Caco-2 (cell line): ENCODE measurements at regions of chr10 and their contacts with region 1.

Region 1: DNA sequence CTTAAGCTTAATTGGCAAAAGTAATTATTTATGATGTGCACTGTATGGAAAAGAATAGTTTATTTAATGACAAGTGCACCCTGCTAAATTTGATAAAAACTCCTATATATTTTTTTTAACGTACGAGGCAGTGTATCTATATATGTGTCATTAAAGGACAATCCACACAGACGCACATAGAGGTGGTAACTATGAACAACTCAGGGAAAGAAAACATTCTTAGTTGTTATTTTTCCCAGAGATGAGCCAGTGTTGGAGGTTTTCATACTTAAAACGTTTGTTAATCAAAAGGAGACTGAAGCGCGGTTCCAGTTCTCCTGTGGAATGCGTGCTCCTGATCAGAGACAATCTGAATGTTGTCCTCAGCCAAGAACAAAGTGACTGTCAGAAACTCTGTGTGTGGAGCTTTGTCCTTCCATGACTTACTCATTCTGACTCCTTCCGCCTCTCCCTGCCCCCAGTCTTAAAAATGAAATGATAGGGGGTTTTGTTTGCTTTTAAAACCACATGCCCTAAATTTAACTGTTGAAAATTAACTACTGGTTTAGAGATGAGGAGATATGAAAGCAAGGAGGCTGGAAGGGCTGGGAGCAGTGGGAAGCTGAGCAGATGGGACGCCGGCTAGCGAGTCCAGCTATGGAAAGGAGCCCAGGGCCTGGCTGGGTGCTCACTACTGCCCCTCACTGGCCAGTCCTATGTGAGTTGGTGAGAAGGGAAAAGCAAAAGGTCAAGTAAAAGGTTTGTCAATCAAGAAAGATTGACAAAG is 99.6 kb downstream of the SVIL start:
- DNase-seq: peak; percentile 92 to 95
- H3K4me3 ChIP-seq: no peak overlapping the region
- H3K4me3 Mint-ChIP-seq: peak overlapping the region; percentile 64
- H3K27ac Mint-ChIP-seq: peak overlapping the region; percentile 80
- H3K4me1 ChIP-seq: peaks cover 38% of the 10 kb centered on the region
- H3K4me1 Mint-ChIP-seq: peaks cover 24% of the 10 kb centered on the region
- H3K27me3 ChIP-seq: no peaks in the 10 kb centered on the region
- H3K27me3 Mint-ChIP-seq: no peaks in the 10 kb centered on the region
- CTCF ChIP-seq: peak; percentile 85 to 95

Region 2: DNA sequence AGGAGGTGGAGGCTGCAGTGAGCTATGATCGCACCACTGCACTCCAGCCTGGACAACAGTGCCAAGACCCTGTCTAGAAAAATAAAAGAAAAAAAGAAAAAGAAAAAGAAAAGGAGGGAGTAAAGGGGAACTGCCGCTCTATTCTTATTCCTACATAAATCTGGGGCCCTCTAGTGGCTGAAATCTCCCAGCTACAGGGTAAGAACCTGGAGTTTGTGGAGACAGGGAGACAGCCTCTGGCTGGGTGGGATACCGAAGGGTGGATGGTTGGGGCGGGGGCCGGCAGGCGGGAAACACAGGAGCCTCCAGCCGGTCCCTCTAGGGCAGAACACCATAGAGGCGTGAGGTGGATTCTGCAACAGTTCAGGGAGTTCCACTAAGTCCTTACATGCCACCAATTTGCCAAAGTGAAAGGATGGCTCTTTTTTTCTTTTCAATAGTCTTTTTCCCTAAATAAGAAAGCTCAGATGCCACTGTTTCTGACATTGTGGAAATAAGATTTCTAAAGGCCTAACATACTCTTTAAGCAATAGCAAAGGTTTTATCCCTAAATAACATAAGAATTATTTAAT is 17.8 kb before region 1 on chr10:
- CTCF ChIA-PET with region 1: interaction called, 20 read pairs
- POLR2A ChIA-PET with region 1: interaction called, 16 read pairs
- intact Hi-C with region 1: loop called (anchors 1 kb)
- DNase-seq: peak in 1 of 2 experiments; percentile 63
- H3K4me3 ChIP-seq: no peak overlapping the region
- H3K4me3 Mint-ChIP-seq: no peak overlapping the region
- H3K27ac Mint-ChIP-seq: no peak overlapping the region
- H3K4me1 ChIP-seq: 0 out of 2 replicates have a peak, but pooled peaks cover 5% of the 10 kb centered on the region
- H3K4me1 Mint-ChIP-seq: peaks cover 6% of the 10 kb centered on the region
- H3K27me3 ChIP-seq: no peaks in the 10 kb centered on the region
- H3K27me3 Mint-ChIP-seq: no peaks in the 10 kb centered on the region
- CTCF ChIP-seq: peak; percentile 76 to 82

Region 3: GRCh38 chr10:29524294-29524693 is 10.9 kb before region 1 on chr10:
- CTCF ChIA-PET with region 1: interaction called, 13 read pairs
- POLR2A ChIA-PET with region 1: no interaction called
- intact Hi-C with region 1: no loop called
- DNase-seq: no peak
- H3K4me3 ChIP-seq: no peak overlapping the region
- H3K4me3 Mint-ChIP-seq: no peak overlapping the region
- H3K27ac Mint-ChIP-seq: no peak overlapping the region
- H3K4me1 ChIP-seq: no peaks in the 10 kb centered on the region
- H3K4me1 Mint-ChIP-seq: no peaks in the 10 kb centered on the region
- H3K27me3 ChIP-seq: no peaks in the 10 kb centered on the region
- H3K27me3 Mint-ChIP-seq: no peaks in the 10 kb centered on the region
- CTCF ChIP-seq: no peak

Region 4: DNA sequence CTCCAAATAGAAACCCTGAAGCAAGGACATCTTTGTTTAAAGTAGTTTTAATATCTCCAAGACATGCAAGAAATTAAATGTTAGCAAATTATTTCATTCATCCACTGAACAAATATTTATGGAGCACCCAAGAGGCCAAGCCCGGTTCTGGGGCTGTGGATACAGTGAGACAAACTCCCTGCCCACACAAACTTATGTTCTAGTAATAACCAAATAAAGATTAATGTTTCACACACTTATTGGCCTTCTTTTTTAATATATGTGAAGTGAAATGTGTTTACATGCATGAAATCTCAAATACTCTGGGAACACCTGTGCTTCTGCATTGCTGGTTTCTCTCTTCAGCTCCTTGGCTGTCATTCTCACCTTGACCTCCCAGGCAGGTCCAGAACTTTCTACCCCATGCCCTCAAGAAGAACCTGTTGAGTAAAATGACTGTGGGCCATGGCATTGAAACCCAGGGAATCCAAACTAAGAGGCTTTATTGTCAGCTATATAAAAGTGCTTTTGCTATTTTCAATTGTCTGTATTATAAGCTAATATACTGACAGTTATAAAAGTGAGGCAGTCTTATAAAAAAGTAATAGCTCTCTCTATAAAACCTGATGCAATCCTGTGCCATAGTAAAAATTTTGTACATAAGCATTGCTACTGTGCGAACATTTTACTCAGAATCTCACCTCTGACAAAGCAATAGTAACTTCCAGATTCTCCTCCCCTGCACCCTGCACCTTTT is 55.9 kb after region 1 on chr10:
- CTCF ChIA-PET with region 1: interaction called, 6 read pairs
- POLR2A ChIA-PET with region 1: no interaction called
- intact Hi-C with region 1: loop called (anchors 1 kb)
- DNase-seq: no peak
- H3K4me3 ChIP-seq: no peak overlapping the region
- H3K4me3 Mint-ChIP-seq: no peak overlapping the region
- H3K27ac Mint-ChIP-seq: peak overlapping the region; percentile 6
- H3K4me1 ChIP-seq: peaks cover 34% of the 10 kb centered on the region
- H3K4me1 Mint-ChIP-seq: peaks cover 16% of the 10 kb centered on the region
- H3K27me3 ChIP-seq: no peaks in the 10 kb centered on the region
- H3K27me3 Mint-ChIP-seq: no peaks in the 10 kb centered on the region
- CTCF ChIP-seq: no peak

Region 5: GRCh38 chr10:29630205-29631048 is 95.2 kb after region 1 on chr10:
- CTCF ChIA-PET with region 1: interaction called, 9 read pairs
- POLR2A ChIA-PET with region 1: no interaction called
- intact Hi-C with region 1: loop called (anchors 1 kb)
- DNase-seq: peak in 1 of 2 experiments; percentile 79
- H3K4me3 ChIP-seq: no peak overlapping the region
- H3K4me3 Mint-ChIP-seq: peak overlapping the region; percentile 64
- H3K27ac Mint-ChIP-seq: peak overlapping the region; percentile 69
- H3K4me1 ChIP-seq: peaks cover 60% of the 10 kb centered on the region
- H3K4me1 Mint-ChIP-seq: peaks cover 60% of the 10 kb centered on the region
- H3K27me3 ChIP-seq: no peaks in the 10 kb centered on the region
- H3K27me3 Mint-ChIP-seq: no peaks in the 10 kb centered on the region
- CTCF ChIP-seq: no peak